ENCODE measurements at regions of chr1 and their contacts with region 1.

Region 1: GRCh38 chr1:109532365-109533136 is 7.1 kb upstream of the GPR61 start:
- DNase-seq: peak; percentile 89
- ATAC-seq: peak; percentile 80

Region 2: GRCh38 chr1:109277434-109278204 is 254.9 kb before region 1 on chr1:
- intact Hi-C with region 1: loop called (anchors 10 kb)
- DNase-seq: peak; percentile 85
- ATAC-seq: peak; percentile 76

Region 3: DNA sequence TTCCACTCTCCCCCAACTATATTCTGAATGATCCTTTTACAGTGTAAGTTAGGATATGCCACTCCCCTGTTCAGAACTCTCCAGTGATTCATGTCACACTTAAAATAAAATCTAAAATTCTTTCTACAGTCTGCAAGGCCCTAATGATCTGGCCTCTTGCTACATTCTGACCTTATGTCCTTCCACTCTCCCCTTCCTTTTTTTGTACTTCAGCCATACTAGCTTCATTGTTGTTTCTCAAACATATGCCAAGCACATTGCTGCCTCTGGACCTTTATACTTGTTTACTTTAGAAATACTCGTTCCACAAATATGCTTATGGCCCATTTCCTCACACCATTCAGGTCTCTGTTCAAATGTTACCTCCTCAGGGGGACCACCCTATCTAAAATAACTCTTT is 91.5 kb before region 1 on chr1:
- intact Hi-C with region 1: loop called (anchors 10 kb)
- DNase-seq: no peak
- ATAC-seq: no peak

Region 4: GRCh38 chr1:109466452-109467300 is 65.9 kb before region 1 on chr1 and contains the start of gene SYPL2:
- intact Hi-C with region 1: no loop called
- DNase-seq: peak; percentile 79
- ATAC-seq: peak; percentile 92
- total RNA-seq, gene SYPL2: 28.9 TPM

Region 5: DNA sequence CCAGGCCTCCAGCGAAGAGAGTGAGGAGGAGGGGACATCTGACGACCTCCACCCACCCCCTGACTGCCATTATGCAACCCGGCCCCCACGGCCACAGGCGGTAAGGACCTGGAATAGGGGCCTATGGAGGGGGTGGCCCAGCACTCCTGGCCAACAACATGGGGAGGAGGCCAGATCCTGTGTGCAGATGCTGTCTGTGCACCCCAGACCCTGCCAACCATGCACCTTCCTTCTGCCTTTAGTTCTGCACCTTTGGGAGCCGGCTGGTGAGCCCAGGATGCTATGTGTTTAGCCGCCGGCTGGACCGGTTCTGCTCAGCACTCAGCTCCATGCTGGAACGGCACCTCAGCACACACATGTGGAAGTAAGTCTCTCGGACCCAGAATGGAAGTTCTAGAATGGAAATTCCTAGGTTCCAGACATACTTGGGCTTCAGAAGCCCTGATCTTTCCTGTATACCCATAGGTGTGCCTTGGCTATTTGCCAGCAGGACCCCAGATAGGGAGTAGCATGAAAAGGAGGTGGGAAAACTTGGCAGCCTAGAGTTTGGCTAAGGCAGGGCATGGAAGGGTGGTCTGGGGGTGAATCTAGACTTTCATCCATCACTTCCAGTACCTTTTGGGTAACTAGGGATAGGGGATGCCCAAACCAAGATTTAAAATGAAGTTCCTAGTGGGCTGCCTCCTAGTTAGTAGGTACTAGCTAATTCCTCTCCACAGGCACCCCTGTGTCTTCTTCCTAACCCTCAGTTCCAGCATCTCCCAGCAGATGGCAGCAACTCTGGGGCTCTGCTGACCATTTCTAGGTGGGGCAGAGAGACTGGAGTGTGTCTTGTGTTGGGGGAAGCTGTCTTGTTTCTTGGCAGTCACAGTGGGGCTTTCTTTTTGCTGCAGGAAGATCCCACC is 42.3 kb before region 1 on chr1:
- intact Hi-C with region 1: loop called (anchors 2 kb)
- DNase-seq: peak; percentile 69
- ATAC-seq: peak; percentile 47